ENCODE measurements at regions of chr11 and their contacts with region 1.

Region 1: DNA sequence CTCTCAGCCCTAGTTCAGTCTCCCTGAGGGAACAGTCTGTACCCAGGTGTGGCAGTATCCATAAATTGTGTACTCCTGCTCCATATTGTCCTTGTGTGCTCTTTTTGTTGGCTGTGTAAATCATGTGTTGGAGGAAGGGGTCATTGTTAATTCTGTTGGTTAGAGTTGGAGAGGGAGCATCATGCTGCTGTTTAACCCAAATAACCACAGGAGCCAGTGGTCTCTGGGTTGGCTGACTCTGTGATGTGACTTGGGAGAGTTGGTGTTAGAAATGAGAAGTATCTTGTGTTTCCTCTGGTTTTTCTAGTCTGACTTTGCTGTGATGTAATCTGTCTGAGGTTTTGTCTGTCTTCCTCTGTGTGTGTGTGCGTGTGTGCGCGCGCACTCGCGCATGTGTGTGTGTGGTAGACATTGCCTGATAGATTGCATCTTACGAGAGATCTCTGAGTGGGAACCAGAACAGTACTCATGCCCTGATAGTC is 30.5 kb downstream of the CTNND1 start:
- DNase-seq: peak; percentile 49
- H3K4me3 Mint-ChIP-seq: peak overlapping the region; percentile 70
- H3K27ac Mint-ChIP-seq: peak overlapping the region; percentile 84
- H3K4me1 Mint-ChIP-seq: peaks cover 46% of the 10 kb centered on the region
- H3K27me3 Mint-ChIP-seq: no peaks in the 10 kb centered on the region
- CTCF ChIP-seq: no peak

Region 2: GRCh38 chr11:57772562-57772961 is 19.5 kb before region 1 on chr11:
- CTCF ChIA-PET with region 1: interaction called, 22 read pairs
- POLR2A ChIA-PET with region 1: interaction called, 80 read pairs
- intact Hi-C with region 1: no loop called
- DNase-seq: no peak
- H3K4me3 Mint-ChIP-seq: peak overlapping the region; percentile 28
- H3K27ac Mint-ChIP-seq: peak overlapping the region; percentile 81
- H3K4me1 Mint-ChIP-seq: peaks cover 53% of the 10 kb centered on the region
- H3K27me3 Mint-ChIP-seq: no peaks in the 10 kb centered on the region
- CTCF ChIP-seq: no peak

Region 3: DNA sequence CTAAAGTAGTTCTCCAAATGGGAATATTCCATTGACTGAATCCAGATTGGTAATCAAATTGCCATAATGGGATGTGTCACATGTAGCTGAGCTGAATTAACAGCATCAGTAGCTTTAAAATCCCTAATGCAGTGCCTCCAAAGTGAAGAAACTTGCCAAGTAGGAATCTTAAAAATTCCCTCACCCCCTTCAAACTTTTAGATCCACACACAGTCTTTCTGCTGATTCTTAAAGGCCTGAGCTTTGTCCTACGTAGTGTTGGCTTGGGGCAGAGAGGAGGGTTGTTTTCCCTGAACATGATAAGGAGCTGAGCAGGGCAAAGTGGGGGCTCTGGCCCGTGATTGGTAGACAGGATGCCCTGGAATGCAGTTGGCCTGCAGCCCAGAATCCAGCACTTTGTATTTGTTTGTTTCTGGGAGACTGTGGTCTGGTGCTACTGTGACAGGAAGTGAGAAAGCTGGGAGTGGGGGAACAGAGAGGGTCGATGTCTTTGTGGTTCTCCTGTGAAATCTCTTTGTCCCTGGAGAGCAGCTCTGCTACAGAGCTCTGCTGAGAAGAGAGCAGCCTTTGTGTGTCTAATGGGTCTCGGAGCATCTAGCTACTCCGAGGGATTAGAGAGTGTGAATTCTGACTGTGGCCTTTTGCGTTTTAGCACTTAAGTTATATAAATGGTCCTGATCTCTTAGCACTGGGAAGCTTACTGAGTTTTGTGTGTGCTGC is 13.6 kb before region 1 on chr11:
- CTCF ChIA-PET with region 1: interaction called, 22 read pairs
- POLR2A ChIA-PET with region 1: interaction called, 80 read pairs
- intact Hi-C with region 1: no loop called
- DNase-seq: peak; percentile 96
- H3K4me3 Mint-ChIP-seq: peak overlapping the region; percentile 49
- H3K27ac Mint-ChIP-seq: peak overlapping the region; percentile 85
- H3K4me1 Mint-ChIP-seq: peaks cover 58% of the 10 kb centered on the region
- H3K27me3 Mint-ChIP-seq: no peaks in the 10 kb centered on the region
- CTCF ChIP-seq: no peak

Region 4: DNA sequence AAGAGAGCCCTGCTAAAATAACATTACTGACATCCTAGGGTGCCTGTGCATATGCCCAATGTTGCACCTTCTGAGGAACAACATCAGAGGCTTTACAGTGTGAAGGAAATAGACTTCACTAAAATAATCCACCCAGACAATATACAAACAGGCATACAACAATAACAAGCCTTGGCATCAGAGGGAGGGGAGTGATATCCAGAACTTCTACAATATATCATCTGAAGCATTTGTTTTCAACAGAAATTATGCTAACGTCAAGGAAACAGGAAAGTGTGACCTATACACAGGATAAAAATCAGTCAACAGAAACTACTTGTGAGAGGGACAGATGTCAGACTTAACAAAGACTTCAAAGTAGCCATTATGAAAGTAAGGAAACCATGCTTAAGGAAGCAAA is 50.8 kb after region 1 on chr11:
- CTCF ChIA-PET with region 1: no interaction called
- POLR2A ChIA-PET with region 1: no interaction called
- intact Hi-C with region 1: no loop called
- DNase-seq: no peak
- H3K4me3 Mint-ChIP-seq: no peak overlapping the region
- H3K27ac Mint-ChIP-seq: no peak overlapping the region
- H3K4me1 Mint-ChIP-seq: no peaks in the 10 kb centered on the region
- H3K27me3 Mint-ChIP-seq: no peaks in the 10 kb centered on the region
- CTCF ChIP-seq: no peak

Measured in MCF 10A (cell line).